ENCODE measurements at regions of chr19 and their contacts with region 1.

Region 1: GRCh38 chr19:50368649-50369570 is 3.5 kb upstream of the NAPSA start:
- DNase-seq: peak; percentile 91
- H3K4me3 ChIP-seq: peak overlapping the region; percentile 53 to 64
- H3K27ac ChIP-seq: peak overlapping the region; percentile 3 to 7
- H3K4me1 ChIP-seq: no peaks in the 10 kb centered on the region
- H3K27me3 ChIP-seq: no peaks in the 10 kb centered on the region
- CTCF ChIP-seq: peak; percentile 85 to 97 (median 91)
- POLR2A ChIP-seq: no peak

Region 2: DNA sequence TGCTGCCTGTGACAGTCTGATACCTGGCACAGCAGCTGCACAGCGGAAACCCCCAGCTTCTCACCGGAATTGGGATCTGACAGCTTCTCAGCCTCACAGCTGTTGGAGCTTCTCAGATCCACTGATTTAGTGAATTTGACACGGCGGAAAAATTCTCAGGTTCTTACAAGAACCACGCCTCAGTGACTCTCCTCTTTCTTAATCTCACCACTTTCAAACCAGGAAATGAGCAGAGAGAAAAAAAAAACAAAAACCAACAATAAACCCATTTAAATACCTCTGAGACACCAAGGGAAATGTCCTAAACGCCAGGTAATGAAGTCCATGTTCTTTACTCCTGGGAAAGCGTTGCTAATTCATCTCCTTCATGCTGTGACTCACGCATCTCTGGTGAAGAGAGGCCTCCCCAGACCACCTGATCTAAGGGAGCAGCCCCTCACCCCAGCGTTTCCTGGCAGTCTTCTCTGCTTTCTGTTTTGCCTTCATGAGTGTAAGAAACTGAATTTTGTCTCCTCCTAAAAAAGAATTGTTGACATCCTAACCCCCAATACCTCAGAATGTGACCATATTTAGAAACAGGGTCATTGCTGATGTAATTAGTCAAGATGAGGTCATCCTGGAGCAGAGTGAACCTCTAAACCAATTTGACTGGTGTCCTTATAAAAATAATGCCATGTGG is 189.9 kb before region 1 on chr19:
- intact Hi-C with region 1: no loop called
- DNase-seq: no peak
- H3K4me3 ChIP-seq: no peak overlapping the region
- H3K27ac ChIP-seq: no peak overlapping the region
- H3K4me1 ChIP-seq: no peaks in the 10 kb centered on the region
- H3K27me3 ChIP-seq: no peaks in the 10 kb centered on the region
- CTCF ChIP-seq: no peak
- POLR2A ChIP-seq: no peak

Region 3: GRCh38 chr19:50414864-50415660 is 46.2 kb after region 1 on chr19:
- intact Hi-C with region 1: loop called (anchors 10 kb)
- DNase-seq: peak; percentile 79
- H3K4me3 ChIP-seq: no peak overlapping the region
- H3K27ac ChIP-seq: no peak overlapping the region
- H3K4me1 ChIP-seq: peaks cover 7% of the 10 kb centered on the region
- H3K27me3 ChIP-seq: no peaks in the 10 kb centered on the region
- CTCF ChIP-seq: peak; percentile 48 to 87 (median 74)
- POLR2A ChIP-seq: no peak

Region 4: GRCh38 chr19:50425581-50425980 is 56.7 kb after region 1 on chr19:
- intact Hi-C with region 1: no loop called
- DNase-seq: no peak
- H3K4me3 ChIP-seq: no peak overlapping the region
- H3K27ac ChIP-seq: no peak overlapping the region
- H3K4me1 ChIP-seq: peaks cover 5% of the 10 kb centered on the region
- H3K27me3 ChIP-seq: no peaks in the 10 kb centered on the region
- CTCF ChIP-seq: no peak
- POLR2A ChIP-seq: no peak

Region 5: GRCh38 chr19:50461066-50461875 is 92.4 kb after region 1 on chr19:
- intact Hi-C with region 1: loop called (anchors 5 kb)
- DNase-seq: peak; percentile 73
- H3K4me3 ChIP-seq: no peak overlapping the region
- H3K27ac ChIP-seq: no peak overlapping the region
- H3K4me1 ChIP-seq: no peaks in the 10 kb centered on the region
- H3K27me3 ChIP-seq: no peaks in the 10 kb centered on the region
- CTCF ChIP-seq: peak; percentile 66 to 88 (median 88)
- POLR2A ChIP-seq: no peak

Region 6: GRCh38 chr19:50794439-50795237 is 425.7 kb after region 1 on chr19:
- intact Hi-C with region 1: loop called (anchors 10 kb)
- DNase-seq: no peak
- H3K4me3 ChIP-seq: no peak overlapping the region
- H3K27ac ChIP-seq: no peak overlapping the region
- H3K4me1 ChIP-seq: no peaks in the 10 kb centered on the region
- H3K27me3 ChIP-seq: no peaks in the 10 kb centered on the region
- CTCF ChIP-seq: no peak
- POLR2A ChIP-seq: no peak

Measured in testis (tissue), 5 donors.